CD4-positive, alpha-beta memory T cell (primary cell): ENCODE measurements at regions of chr17 and their contacts with region 1.

Region 1: GRCh38 chr17:29931231-29931932 is 1.4 kb upstream of the SSH2 start:
- DNase-seq: peak; percentile 75 to 85 (median 81)
- H3K4me3 ChIP-seq: no peak overlapping the region
- H3K4me3 Mint-ChIP-seq: no peak overlapping the region
- H3K27ac ChIP-seq: peak overlapping the region; percentile 88
- H3K27ac Mint-ChIP-seq: no peak overlapping the region
- H3K4me1 ChIP-seq: peaks cover 46% of the 10 kb centered on the region
- H3K4me1 Mint-ChIP-seq: peaks cover 15 to 32% (median 29%) of the 10 kb centered on the region in 4 donors
- H3K27me3 ChIP-seq: no peaks in the 10 kb centered on the region
- H3K27me3 Mint-ChIP-seq: no peaks in the 10 kb centered on the region

Region 2: GRCh38 chr17:29579866-29580771 is 351.3 kb before region 1 on chr17:
- CTCF ChIA-PET with region 1: interaction called, 14 read pairs
- POLR2A ChIA-PET with region 1: no interaction called
- intact Hi-C with region 1: loop called (anchors 2 kb)
- DNase-seq: peak; percentile 85 to 91 (median 87)
- H3K4me3 ChIP-seq: no peak overlapping the region
- H3K4me3 Mint-ChIP-seq: peak overlapping the region in 2 of 8 donors; percentile 8 to 65
- H3K27ac ChIP-seq: no peak overlapping the region
- H3K27ac Mint-ChIP-seq: peak overlapping the region; percentile 55 to 90 (median 83)
- H3K4me1 ChIP-seq: peaks cover 18% of the 10 kb centered on the region
- H3K4me1 Mint-ChIP-seq: peaks cover 8 to 31% (median 18%) of the 10 kb centered on the region in 4 donors
- H3K27me3 ChIP-seq: no peaks in the 10 kb centered on the region
- H3K27me3 Mint-ChIP-seq: no peaks in the 10 kb centered on the region

Region 3: DNA sequence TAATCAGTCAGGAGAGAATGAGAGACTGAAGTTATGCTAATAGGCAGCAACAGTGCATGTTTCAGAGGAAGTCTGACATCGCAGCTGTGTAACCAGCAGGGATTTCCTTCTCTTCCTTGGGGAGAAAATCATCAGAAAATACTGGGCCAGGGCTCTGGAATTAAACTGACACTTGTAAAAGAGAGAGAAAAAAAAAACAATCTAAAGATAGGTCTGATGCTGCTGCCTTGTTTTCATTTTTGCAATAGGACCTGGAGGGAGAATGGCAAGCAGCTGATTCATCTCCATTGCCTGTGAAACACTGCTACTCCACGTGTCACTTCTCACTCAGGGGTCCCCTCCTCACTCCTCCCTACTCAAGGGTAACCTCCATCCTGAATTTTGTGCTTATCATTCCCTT is 291.0 kb before region 1 on chr17:
- CTCF ChIA-PET with region 1: interaction called, 13 read pairs
- POLR2A ChIA-PET with region 1: interaction called, 6 read pairs
- intact Hi-C with region 1: loop called (anchors 1 kb)
- DNase-seq: no peak
- H3K4me3 ChIP-seq: no peak overlapping the region
- H3K4me3 Mint-ChIP-seq: no peak overlapping the region
- H3K27ac ChIP-seq: no peak overlapping the region
- H3K27ac Mint-ChIP-seq: peak overlapping the region in 5 of 7 donors; percentile 60 to 96 (median 75)
- H3K4me1 ChIP-seq: no peaks in the 10 kb centered on the region
- H3K4me1 Mint-ChIP-seq: peaks cover 7 to 19% (median 13%) of the 10 kb centered on the region in 4 donors
- H3K27me3 ChIP-seq: no peaks in the 10 kb centered on the region
- H3K27me3 Mint-ChIP-seq: no peaks in the 10 kb centered on the region

Region 4: DNA sequence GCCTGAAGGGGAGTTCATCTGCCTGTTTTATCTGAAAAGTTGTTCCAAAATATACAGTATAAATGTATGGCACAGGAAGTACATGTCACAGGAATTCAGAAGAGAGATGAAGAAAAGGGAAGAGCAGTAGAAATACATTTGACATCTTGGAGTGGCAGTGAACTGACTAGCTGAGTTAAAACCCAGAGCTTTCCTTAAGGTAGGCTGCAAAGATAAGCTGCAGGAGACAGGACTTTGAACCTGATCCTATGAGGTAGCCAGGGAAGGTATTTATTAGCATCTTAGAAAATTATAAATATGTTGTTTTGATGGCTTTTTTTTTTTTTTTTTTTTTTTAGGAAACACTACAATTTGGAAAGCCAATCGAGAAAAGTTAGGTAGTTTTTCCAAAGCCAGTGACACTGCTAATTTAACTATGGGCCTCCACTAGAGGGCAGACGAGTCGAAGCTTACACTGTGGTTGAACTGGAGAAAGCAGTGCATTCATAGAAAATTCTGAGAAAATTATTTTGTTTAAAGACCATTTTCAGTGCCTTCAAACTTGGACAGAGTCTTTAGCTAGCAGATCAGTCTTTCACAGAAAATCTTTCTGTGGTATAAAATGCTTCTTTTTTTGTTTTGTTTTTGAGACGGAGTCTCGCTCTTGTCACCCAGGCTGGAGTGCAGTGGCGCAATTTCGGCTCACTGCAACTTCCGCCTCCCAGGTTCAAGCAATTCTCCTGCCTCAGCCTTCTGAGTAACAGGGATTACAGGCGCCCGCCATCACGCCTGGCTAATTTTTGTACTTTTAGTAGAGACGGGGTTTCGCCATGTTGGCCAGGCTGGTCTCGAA is 123.6 kb before region 1 on chr17:
- CTCF ChIA-PET with region 1: interaction called, 387 read pairs
- POLR2A ChIA-PET with region 1: interaction called, 68 read pairs
- intact Hi-C with region 1: loop called (anchors 1 kb)
- DNase-seq: peak; percentile 62 to 72 (median 66)
- H3K4me3 ChIP-seq: no peak overlapping the region
- H3K4me3 Mint-ChIP-seq: peak overlapping the region in 1 of 8 donors; percentile 10
- H3K27ac ChIP-seq: no peak overlapping the region
- H3K27ac Mint-ChIP-seq: peak overlapping the region in 3 of 7 donors; percentile 23 to 67 (median 47)
- H3K4me1 ChIP-seq: peaks cover 16% of the 10 kb centered on the region
- H3K4me1 Mint-ChIP-seq: peaks cover 13 to 23% (median 20%) of the 10 kb centered on the region in 4 donors
- H3K27me3 ChIP-seq: no peaks in the 10 kb centered on the region
- H3K27me3 Mint-ChIP-seq: no peaks in the 10 kb centered on the region

Region 5: GRCh38 chr17:29867643-29868181 is 63.7 kb before region 1 on chr17:
- CTCF ChIA-PET with region 1: interaction called, 66 read pairs
- POLR2A ChIA-PET with region 1: interaction called, 10 read pairs
- intact Hi-C with region 1: loop called (anchors 1 kb)
- DNase-seq: no peak
- H3K4me3 ChIP-seq: no peak overlapping the region
- H3K4me3 Mint-ChIP-seq: no peak overlapping the region
- H3K27ac ChIP-seq: no peak overlapping the region
- H3K27ac Mint-ChIP-seq: peak overlapping the region in 2 of 7 donors; percentile 13 to 14
- H3K4me1 ChIP-seq: peaks cover 6% of the 10 kb centered on the region
- H3K4me1 Mint-ChIP-seq: peaks cover 17 to 22% (median 18%) of the 10 kb centered on the region in 4 donors
- H3K27me3 ChIP-seq: no peaks in the 10 kb centered on the region
- H3K27me3 Mint-ChIP-seq: no peaks in the 10 kb centered on the region

Region 6: GRCh38 chr17:29918922-29919856 is 12.2 kb before region 1 on chr17:
- CTCF ChIA-PET with region 1: interaction called, 50 read pairs
- POLR2A ChIA-PET with region 1: interaction called, 8 read pairs
- intact Hi-C with region 1: no loop called
- DNase-seq: no peak
- H3K4me3 ChIP-seq: no peak overlapping the region
- H3K4me3 Mint-ChIP-seq: no peak overlapping the region
- H3K27ac ChIP-seq: no peak overlapping the region
- H3K27ac Mint-ChIP-seq: peak overlapping the region in 5 of 7 donors; percentile 1 to 60 (median 35)
- H3K4me1 ChIP-seq: no peaks in the 10 kb centered on the region
- H3K4me1 Mint-ChIP-seq: peaks cover 24 to 40% (median 28%) of the 10 kb centered on the region in 4 donors
- H3K27me3 ChIP-seq: no peaks in the 10 kb centered on the region
- H3K27me3 Mint-ChIP-seq: no peaks in the 10 kb centered on the region